Activated CD4-positive, alpha-beta T cell treated with anti-CD3 and anti-CD28 coated beads, Interleukin-2, amount 10 ng/mL, durations not matched to agents 24 days and 14 days (primary cell): ENCODE measurements at regions of chr2 and their contacts with region 1.

Region 1: DNA sequence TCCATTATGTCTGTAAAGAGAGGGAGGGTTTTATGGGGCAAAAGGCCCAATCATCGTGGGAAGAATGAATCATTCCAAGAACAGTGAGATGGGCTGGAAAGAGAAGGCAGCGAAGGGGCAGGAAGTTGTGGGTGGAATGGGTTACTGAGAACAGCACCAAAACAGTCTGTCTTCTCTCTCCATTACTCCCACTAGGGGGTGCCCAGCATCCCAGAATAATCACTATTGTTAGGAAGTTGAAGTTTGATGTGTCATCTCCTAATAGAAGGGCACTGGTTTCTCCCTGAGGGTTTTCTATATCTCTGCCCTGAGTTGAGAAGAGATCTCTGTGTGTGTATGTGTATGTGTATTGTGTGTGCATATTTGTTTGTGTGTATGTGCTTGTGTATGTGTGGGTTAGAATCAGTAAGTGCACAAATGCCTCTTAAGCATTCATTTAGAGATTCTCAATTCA is 76.6 kb upstream of the MAP4K3 start:
- DNase-seq: peak; percentile 77
- H3K4me3 Mint-ChIP-seq: peak overlapping the region; percentile 15
- H3K27ac Mint-ChIP-seq: peak overlapping the region; percentile 59
- H3K4me1 Mint-ChIP-seq: peaks cover 40% of the 10 kb centered on the region
- H3K27me3 Mint-ChIP-seq: peaks cover 4% of the 10 kb centered on the region

Region 2: DNA sequence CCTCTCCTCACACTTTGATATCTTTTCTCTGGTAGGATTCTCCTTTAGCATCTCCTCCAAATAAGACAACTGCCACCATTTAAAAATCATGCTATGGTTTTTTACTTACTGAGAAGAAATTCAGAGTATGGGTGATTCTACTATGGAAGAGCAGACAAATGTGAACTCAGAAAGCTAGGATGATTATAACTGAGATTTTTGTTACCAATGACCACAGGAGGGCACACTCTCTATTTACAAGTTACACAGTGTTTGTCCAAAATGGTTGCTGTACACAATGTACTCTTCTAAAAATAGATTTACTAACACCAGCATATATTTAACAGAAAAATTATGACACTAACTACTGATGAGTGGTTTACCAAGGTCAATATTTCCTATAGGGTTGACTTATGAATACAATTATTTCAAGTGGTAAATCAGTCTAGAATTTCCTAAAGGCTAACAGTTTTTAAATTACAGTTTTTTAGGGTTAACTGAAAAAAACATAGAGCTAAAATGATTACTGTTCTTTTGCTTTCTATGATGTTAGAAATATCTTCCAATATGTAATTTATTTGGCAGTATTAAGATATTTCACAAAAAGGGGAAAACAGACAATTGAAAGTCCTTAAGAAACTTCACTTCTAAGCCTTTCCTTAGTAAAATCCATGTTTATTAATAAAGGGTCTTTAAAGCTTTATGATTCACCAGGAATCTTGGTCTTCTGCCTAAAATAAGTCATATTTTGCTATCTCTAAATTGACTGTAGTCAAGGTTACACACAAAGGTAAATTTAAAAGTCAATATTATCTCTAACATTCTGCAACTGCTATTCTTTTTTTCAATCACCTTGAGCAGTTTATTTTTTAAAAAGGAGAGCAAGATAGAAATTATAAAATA is 133.8 kb before region 1 on chr2:
- intact Hi-C with region 1: loop called (anchors 1 kb)
- DNase-seq: peak; percentile 65
- H3K4me3 Mint-ChIP-seq: no peak overlapping the region
- H3K27ac Mint-ChIP-seq: peak overlapping the region; percentile 27
- H3K4me1 Mint-ChIP-seq: peaks cover 29% of the 10 kb centered on the region
- H3K27me3 Mint-ChIP-seq: no peaks in the 10 kb centered on the region

Region 3: GRCh38 chr2:39443009-39443408 is 70.7 kb before region 1 on chr2:
- intact Hi-C with region 1: no loop called
- DNase-seq: no peak
- H3K4me3 Mint-ChIP-seq: no peak overlapping the region
- H3K27ac Mint-ChIP-seq: no peak overlapping the region
- H3K4me1 Mint-ChIP-seq: peaks cover 16% of the 10 kb centered on the region
- H3K27me3 Mint-ChIP-seq: no peaks in the 10 kb centered on the region

Region 4: GRCh38 chr2:39469807-39470206 is 43.9 kb before region 1 on chr2:
- intact Hi-C with region 1: loop called (anchors 1 kb)
- DNase-seq: no peak
- H3K4me3 Mint-ChIP-seq: no peak overlapping the region
- H3K27ac Mint-ChIP-seq: no peak overlapping the region
- H3K4me1 Mint-ChIP-seq: peaks cover 17% of the 10 kb centered on the region
- H3K27me3 Mint-ChIP-seq: no peaks in the 10 kb centered on the region

Region 5: GRCh38 chr2:39537150-39537549 is 23.5 kb after region 1 on chr2:
- intact Hi-C with region 1: loop called (anchors 1 kb)
- DNase-seq: no peak
- H3K4me3 Mint-ChIP-seq: no peak overlapping the region
- H3K27ac Mint-ChIP-seq: peak overlapping the region; percentile 5
- H3K4me1 Mint-ChIP-seq: peaks cover 9% of the 10 kb centered on the region
- H3K27me3 Mint-ChIP-seq: peaks cover 5% of the 10 kb centered on the region

Region 6: GRCh38 chr2:39728941-39729351 is 215.3 kb after region 1 on chr2:
- intact Hi-C with region 1: loop called (anchors 5 kb)
- DNase-seq: peak; percentile 70
- H3K4me3 Mint-ChIP-seq: no peak overlapping the region
- H3K27ac Mint-ChIP-seq: no peak overlapping the region
- H3K4me1 Mint-ChIP-seq: peaks cover 10% of the 10 kb centered on the region
- H3K27me3 Mint-ChIP-seq: peaks cover 2% of the 10 kb centered on the region